A549 (cell line): ENCODE measurements at regions of chr20 and their contacts with region 1.

Region 1: DNA sequence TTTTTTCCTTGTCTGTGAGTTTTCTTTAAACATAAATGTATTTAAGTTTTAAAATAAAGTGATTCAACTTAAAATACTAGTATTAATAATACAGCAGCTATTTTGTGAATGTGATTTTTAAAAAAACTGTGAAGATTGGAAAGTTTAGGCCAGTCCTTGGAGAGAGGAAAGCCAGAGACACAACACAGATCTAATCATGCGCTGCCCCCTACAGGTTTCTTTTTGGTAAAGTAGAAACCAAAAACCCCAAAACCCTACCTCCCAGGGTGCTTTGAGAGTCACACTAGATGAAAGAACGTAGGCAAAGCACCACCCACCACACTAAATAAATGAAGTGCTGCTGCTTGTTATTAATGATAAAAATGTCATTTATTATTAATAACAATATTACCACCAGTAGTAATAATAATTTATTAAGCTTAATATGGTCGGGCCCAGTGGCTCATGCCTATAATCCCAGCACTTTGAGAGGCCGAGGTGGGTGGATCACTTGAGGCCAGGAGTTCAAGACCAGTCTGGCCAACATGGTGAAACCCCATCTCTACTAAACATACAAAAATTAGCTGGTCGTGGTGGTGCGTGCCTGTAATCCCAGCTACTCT is 33.7 kb downstream of the SLC9A8 start:
- DNase-seq: peak; percentile 47 to 72
- ATAC-seq: peak; percentile 92 to 96
- H3K4me3 ChIP-seq: no peak overlapping the region
- H3K27ac ChIP-seq: peak overlapping the region; percentile 59 to 74; a peak in 5 of 6 replicates
- H3K4me1 ChIP-seq: peaks cover 20% of the 10 kb centered on the region; the same call in 1 of the 3 replicates
- CTCF ChIP-seq: peak; percentile 86
- EP300 ChIP-seq: no peak
- POLR2A ChIP-seq: no peak
- RAD21 ChIP-seq: peak; percentile 89 to 91

Region 2: GRCh38 chr20:49541733-49542513 is 304.4 kb before region 1 on chr20:
- CTCF ChIA-PET with region 1: interaction called, 43 read pairs
- POLR2A ChIA-PET with region 1: no interaction called
- DNase-seq: peak; percentile 81 to 87
- ATAC-seq: peak; percentile 73 to 87
- H3K4me3 ChIP-seq: no peak overlapping the region
- H3K27ac ChIP-seq: peak overlapping the region; percentile 48 to 61; a peak in 5 of 6 replicates
- H3K4me1 ChIP-seq: 0 out of 3 replicates have a peak, but pooled peaks cover 5% of the 10 kb centered on the region
- CTCF ChIP-seq: peak; percentile 98
- EP300 ChIP-seq: no peak
- POLR2A ChIP-seq: no peak
- RAD21 ChIP-seq: peak; percentile 98

Region 3: DNA sequence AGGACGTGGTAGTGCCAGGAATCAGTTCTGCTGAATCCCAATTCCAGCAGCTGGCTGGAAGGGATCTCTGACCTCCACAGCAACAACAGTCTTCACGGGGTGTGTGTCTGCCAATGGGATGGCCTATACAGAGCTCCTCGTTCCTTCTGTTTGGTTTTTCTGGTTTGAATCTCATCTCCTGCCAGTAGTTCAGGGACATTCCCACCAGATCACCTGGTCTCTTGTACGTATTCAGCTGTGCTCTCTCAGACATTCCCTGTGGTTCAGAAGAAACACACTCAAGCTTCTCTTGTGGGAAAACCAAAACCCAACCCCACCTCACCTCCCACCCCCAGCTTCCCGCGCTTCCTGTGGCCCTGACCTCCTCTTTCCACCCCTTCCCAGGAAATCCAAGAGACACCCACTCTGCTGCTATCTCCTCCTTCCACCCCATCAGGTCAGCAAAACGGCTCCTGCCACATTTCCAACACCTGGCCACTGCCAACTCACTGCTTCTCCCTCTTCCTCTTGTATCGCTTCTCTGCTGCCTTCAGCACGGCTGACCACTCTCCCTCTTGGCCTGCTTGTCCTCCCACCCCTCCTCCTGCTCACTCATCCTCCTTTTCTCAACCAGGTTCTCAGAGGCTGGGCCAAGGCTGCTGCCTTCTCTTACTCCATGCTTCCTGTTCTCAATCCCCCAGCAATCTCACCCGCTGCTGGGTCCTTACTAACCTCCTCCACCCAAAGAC is 215.1 kb before region 1 on chr20:
- CTCF ChIA-PET with region 1: interaction called, 17 read pairs
- POLR2A ChIA-PET with region 1: no interaction called
- DNase-seq: no peak
- ATAC-seq: peak; percentile 26 to 58; a peak in 4 of 6 replicates
- H3K4me3 ChIP-seq: no peak overlapping the region
- H3K27ac ChIP-seq: peak overlapping the region in 1 of 2 experiments; percentile 61; a peak in 3 of 6 replicates
- H3K4me1 ChIP-seq: peaks cover 35% of the 10 kb centered on the region; the same call in 2 of the 3 replicates
- CTCF ChIP-seq: no peak
- EP300 ChIP-seq: no peak
- POLR2A ChIP-seq: no peak
- RAD21 ChIP-seq: no peak

Region 4: GRCh38 chr20:49701241-49701790 is 145.0 kb before region 1 on chr20:
- CTCF ChIA-PET with region 1: interaction called, 10 read pairs
- POLR2A ChIA-PET with region 1: no interaction called
- DNase-seq: peak in 1 of 2 experiments; percentile 86
- ATAC-seq: peak; percentile 69 to 76
- H3K4me3 ChIP-seq: peak overlapping the region; percentile 14; the same call in 2 of the 3 replicates
- H3K27ac ChIP-seq: peak overlapping the region; percentile 98
- H3K4me1 ChIP-seq: peaks cover 93% of the 10 kb centered on the region
- CTCF ChIP-seq: no peak
- EP300 ChIP-seq: peak; percentile 58 to 75; a peak in 2 of 5 replicates
- POLR2A ChIP-seq: no peak
- RAD21 ChIP-seq: 0 out of 5 replicates have a peak, but pooled peaks of 1 of the 2 experiments have one; percentile 19

Region 5: DNA sequence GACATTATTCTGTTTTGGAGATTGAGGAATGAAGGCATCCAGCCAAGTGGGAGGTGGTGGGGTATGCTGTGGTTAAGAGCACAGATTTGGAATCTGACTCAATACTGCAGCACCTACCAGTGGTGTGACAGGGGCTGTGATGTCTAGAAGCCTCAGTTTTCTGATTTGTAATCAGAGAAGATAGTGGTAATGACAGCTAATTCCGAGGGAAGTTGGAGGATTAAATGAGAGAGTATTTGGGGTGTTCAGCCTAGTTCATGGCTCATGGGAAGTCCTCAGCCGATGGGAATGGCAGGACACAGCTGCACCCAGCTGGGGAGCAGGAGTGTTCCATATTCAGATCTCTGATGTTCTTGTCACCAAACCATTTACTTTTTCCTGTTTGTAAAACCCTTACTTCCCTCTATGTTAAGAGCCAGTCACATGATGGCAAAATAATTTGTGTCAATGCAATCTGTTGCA is 24.4 kb before region 1 on chr20:
- CTCF ChIA-PET with region 1: interaction called, 34 read pairs
- POLR2A ChIA-PET with region 1: no interaction called
- DNase-seq: no peak
- ATAC-seq: peak in 1 of 2 experiments; percentile 43; a peak in 1 of 6 replicates
- H3K4me3 ChIP-seq: no peak overlapping the region
- H3K27ac ChIP-seq: peak overlapping the region in 1 of 2 experiments; percentile 32; a peak in 1 of 6 replicates
- H3K4me1 ChIP-seq: peaks cover 35% of the 10 kb centered on the region
- CTCF ChIP-seq: no peak
- EP300 ChIP-seq: no peak
- POLR2A ChIP-seq: no peak
- RAD21 ChIP-seq: peak in 1 of 2 experiments; percentile 35; a peak in 3 of 5 replicates

Region 6: DNA sequence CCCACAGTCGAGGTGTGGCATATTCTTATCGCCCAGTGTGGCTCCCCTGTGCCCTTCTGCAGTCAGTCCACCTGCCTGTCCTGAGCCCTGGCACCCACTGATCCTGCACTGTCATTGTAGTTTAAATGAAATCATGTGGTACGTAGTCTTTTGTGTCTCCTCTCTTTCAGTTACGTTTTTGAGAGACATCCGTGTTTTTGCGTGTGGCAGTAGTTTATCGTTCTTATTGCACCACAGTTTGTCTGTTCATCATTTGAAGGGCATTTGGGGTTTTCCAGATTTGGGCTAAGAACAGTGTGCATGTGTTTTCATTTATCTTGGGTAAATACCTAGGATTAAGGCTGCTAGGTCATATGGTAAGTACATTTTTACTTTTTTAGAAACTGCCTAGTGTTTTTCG is 19.7 kb after region 1 on chr20:
- CTCF ChIA-PET with region 1: interaction called, 10 read pairs
- POLR2A ChIA-PET with region 1: no interaction called
- DNase-seq: no peak
- ATAC-seq: no peak
- H3K4me3 ChIP-seq: no peak overlapping the region
- H3K27ac ChIP-seq: no peak overlapping the region
- H3K4me1 ChIP-seq: no peaks in the 10 kb centered on the region; the same call in 2 of the 3 replicates
- CTCF ChIP-seq: no peak
- EP300 ChIP-seq: no peak
- POLR2A ChIP-seq: no peak
- RAD21 ChIP-seq: no peak

Region 7: GRCh38 chr20:49915378-49916145 is 69.3 kb after region 1 on chr20 and contains the start of gene SPATA2:
- CTCF ChIA-PET with region 1: interaction called, 10 read pairs
- POLR2A ChIA-PET with region 1: no interaction called
- DNase-seq: peak; percentile 89 to 97
- ATAC-seq: peak; percentile 90 to 94
- H3K4me3 ChIP-seq: peak within 1 kb of the TSS; percentile 93
- H3K27ac ChIP-seq: peak within 1 kb of the TSS; percentile 99
- H3K4me1 ChIP-seq: peaks cover 23% of the 10 kb centered on the region
- CTCF ChIP-seq: no peak
- EP300 ChIP-seq: no peak
- POLR2A ChIP-seq: peak; percentile 45
- RAD21 ChIP-seq: no peak
- polyA plus RNA-seq, gene SPATA2: 4.9 and 5.1 TPM in 2 replicates